Endothelial cell of umbilical vein (primary cell): ENCODE measurements at regions of chr17 and their contacts with region 1.

Region 1: GRCh38 chr17:15257258-15257788 is 7.8 kb downstream of the PMP22 start:
- DNase-seq: peak; percentile 70
- H3K4me3 ChIP-seq: peak overlapping the region in 1 of 3 experiments; percentile 12
- H3K27ac ChIP-seq: no peak overlapping the region
- H3K4me1 ChIP-seq: peaks cover 25% of the 10 kb centered on the region
- H3K27me3 ChIP-seq: no peaks in the 10 kb centered on the region
- CTCF ChIP-seq: peak; percentile 87 to 92
- POLR2A ChIP-seq: peak; percentile 62

Region 2: GRCh38 chr17:15123593-15124263 is 133.6 kb before region 1 on chr17:
- CTCF ChIA-PET with region 1: no interaction called
- POLR2A ChIA-PET with region 1: no interaction called
- dilution Hi-C with region 1: no loop called
- intact Hi-C with region 1: no loop called
- DNase-seq: no peak
- H3K4me3 ChIP-seq: no peak overlapping the region
- H3K27ac ChIP-seq: no peak overlapping the region
- H3K4me1 ChIP-seq: no peaks in the 10 kb centered on the region
- H3K27me3 ChIP-seq: no peaks in the 10 kb centered on the region
- CTCF ChIP-seq: no peak
- POLR2A ChIP-seq: no peak

Region 3: GRCh38 chr17:15444805-15445204 is 187.5 kb after region 1 on chr17:
- CTCF ChIA-PET with region 1: interaction called, 3 read pairs
- POLR2A ChIA-PET with region 1: no interaction called
- dilution Hi-C with region 1: no loop called
- intact Hi-C with region 1: loop called (anchors 1 kb)
- DNase-seq: peak; percentile 96
- H3K4me3 ChIP-seq: no peak overlapping the region
- H3K27ac ChIP-seq: peak overlapping the region; percentile 92
- H3K4me1 ChIP-seq: peaks cover 51% of the 10 kb centered on the region
- H3K27me3 ChIP-seq: no peaks in the 10 kb centered on the region
- CTCF ChIP-seq: no peak
- POLR2A ChIP-seq: peak; percentile 74

Region 4: GRCh38 chr17:15490634-15491261 is 233.4 kb after region 1 on chr17:
- CTCF ChIA-PET with region 1: interaction called, 12 read pairs
- POLR2A ChIA-PET with region 1: no interaction called
- dilution Hi-C with region 1: no loop called
- intact Hi-C with region 1: no loop called
- DNase-seq: peak; percentile 93
- H3K4me3 ChIP-seq: no peak overlapping the region
- H3K27ac ChIP-seq: peak overlapping the region; percentile 91
- H3K4me1 ChIP-seq: peaks cover 23% of the 10 kb centered on the region
- H3K27me3 ChIP-seq: no peaks in the 10 kb centered on the region
- CTCF ChIP-seq: no peak
- POLR2A ChIP-seq: peak; percentile 55

Region 5: DNA sequence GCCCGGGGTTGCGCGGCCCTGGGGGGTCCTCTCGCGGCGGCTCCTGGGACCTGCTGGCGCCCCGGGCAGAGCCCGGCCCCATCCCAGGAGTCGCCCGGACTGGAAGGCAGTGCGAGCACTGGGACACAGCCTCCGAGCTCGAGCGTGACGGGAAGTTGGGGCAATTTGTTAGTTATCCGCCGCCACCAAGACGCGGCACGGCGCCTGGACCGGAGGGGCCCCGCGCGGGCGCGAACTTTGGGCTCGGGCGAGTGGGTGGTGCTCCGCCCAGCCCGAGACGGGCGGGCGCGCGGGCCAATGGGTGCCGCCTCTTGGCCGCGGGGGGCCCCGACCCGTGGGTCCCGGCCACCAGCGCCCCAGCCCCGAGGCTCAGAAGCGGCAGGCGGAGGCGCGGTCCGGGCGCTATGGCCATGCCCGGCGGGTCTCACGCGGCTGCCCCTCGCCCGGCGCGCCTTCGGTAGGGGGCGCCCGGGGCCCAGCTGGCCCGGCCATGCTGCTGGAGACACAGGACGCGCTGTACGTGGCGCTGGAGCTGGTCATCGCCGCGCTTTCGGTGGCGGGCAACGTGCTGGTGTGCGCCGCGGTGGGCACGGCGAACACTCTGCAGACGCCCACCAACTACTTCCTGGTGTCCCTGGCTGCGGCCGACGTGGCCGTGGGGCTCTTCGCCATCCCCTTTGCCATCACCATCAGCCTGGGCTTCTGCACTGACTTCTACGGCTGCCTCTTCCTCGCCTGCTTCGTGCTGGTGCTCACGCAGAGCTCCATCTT is 687.6 kb after region 1 on chr17 and contains the start of gene ADORA2B:
- CTCF ChIA-PET with region 1: no interaction called
- POLR2A ChIA-PET with region 1: no interaction called
- dilution Hi-C with region 1: no loop called
- intact Hi-C with region 1: loop called (anchors 2 kb)
- DNase-seq: peak; percentile 85
- H3K4me3 ChIP-seq: peak within 1 kb of the TSS; percentile 33 to 67 (median 56)
- H3K27ac ChIP-seq: peak within 1 kb of the TSS; percentile 70
- H3K4me1 ChIP-seq: peaks cover 26% of the 10 kb centered on the region
- H3K27me3 ChIP-seq: no peaks in the 10 kb centered on the region
- CTCF ChIP-seq: peak; percentile 68 to 71
- POLR2A ChIP-seq: peak; percentile 57
- total RNA-seq, gene ADORA2B: 6.5 and 9.8 TPM in 2 replicates